ENCODE measurements at regions of chr13 and their contacts with region 1.

Region 1: DNA sequence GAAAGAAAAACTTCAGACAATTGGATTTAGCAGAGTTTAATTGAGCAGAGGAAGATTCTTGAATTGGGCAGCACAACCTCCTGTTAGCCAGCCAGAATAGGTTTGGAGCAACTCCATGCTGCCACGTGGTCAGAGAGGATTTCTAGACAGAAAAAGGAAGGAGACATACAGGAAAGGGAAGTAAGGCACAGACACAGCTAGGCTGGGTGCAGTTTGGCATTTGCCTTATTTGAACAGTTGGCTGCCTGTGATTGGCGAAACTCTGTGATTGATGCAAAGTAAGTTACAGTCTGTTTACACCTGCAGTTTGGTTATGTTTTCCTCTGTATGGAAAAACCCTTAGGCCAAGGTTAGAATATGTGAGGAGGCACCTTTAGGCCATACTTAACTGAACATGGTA is 85.8 kb upstream of the SPATA13 start:
- DNase-seq: peak; percentile 84
- H3K4me3 ChIP-seq: no peak overlapping the region
- H3K27ac ChIP-seq: peak overlapping the region; percentile 96
- H3K4me1 ChIP-seq: peaks cover 39% of the 10 kb centered on the region
- H3K27me3 ChIP-seq: no peaks in the 10 kb centered on the region
- CTCF ChIP-seq: no peak
- POLR2A ChIP-seq: peak; percentile 29

Region 2: GRCh38 chr13:24038841-24039330 is 35.8 kb before region 1 on chr13:
- CTCF ChIA-PET with region 1: no interaction called
- POLR2A ChIA-PET with region 1: no interaction called
- dilution Hi-C with region 1: no loop called
- intact Hi-C with region 1: no loop called
- DNase-seq: no peak
- H3K4me3 ChIP-seq: no peak overlapping the region
- H3K27ac ChIP-seq: no peak overlapping the region
- H3K4me1 ChIP-seq: no peaks in the 10 kb centered on the region
- H3K27me3 ChIP-seq: peaks cover 1 to 5% of the 10 kb centered on the region in 2 experiments
- CTCF ChIP-seq: no peak
- POLR2A ChIP-seq: no peak

Region 3: GRCh38 chr13:24141333-24141910 is 66.7 kb after region 1 on chr13:
- CTCF ChIA-PET with region 1: no interaction called
- POLR2A ChIA-PET with region 1: no interaction called
- dilution Hi-C with region 1: no loop called
- intact Hi-C with region 1: loop called (anchors 1 kb)
- DNase-seq: no peak
- H3K4me3 ChIP-seq: no peak overlapping the region
- H3K27ac ChIP-seq: no peak overlapping the region
- H3K4me1 ChIP-seq: peaks cover 20% of the 10 kb centered on the region
- H3K27me3 ChIP-seq: no peaks in the 10 kb centered on the region
- CTCF ChIP-seq: no peak
- POLR2A ChIP-seq: no peak

Region 4: GRCh38 chr13:24148399-24149305 is 74.0 kb after region 1 on chr13:
- CTCF ChIA-PET with region 1: interaction called, 3 read pairs
- POLR2A ChIA-PET with region 1: no interaction called
- dilution Hi-C with region 1: no loop called
- intact Hi-C with region 1: loop called (anchors 1 kb)
- DNase-seq: peak; percentile 94
- H3K4me3 ChIP-seq: no peak overlapping the region
- H3K27ac ChIP-seq: peak overlapping the region; percentile 91
- H3K4me1 ChIP-seq: peaks cover 19% of the 10 kb centered on the region
- H3K27me3 ChIP-seq: no peaks in the 10 kb centered on the region
- CTCF ChIP-seq: no peak
- POLR2A ChIP-seq: no peak

Measured in endothelial cell of umbilical vein (primary cell).